Heart left ventricle (tissue), 16 donors: ENCODE measurements at regions of chr6 and their contacts with region 1.

Region 1: DNA sequence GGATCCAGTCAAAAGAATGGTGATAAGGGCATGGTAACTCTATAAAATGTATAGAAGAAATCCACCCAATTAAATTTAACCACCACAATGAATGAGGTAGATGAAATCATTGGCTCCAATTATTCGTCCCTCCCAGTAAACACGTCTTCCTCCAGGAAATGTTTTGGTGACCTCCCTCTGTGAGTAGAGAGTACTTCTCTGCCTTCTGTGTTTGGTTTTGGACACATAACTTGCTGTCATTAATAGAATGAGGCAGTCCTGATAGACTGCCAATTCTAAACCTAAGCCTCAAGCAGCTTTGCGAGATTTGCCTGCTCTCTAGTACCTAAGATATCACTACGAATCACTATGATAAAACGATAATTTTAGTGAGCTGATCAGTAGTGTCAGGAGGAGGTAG is 632.8 kb downstream of the HDGFL1 start:
- DNase-seq: no peak
- ATAC-seq: peak in 3 of 4 donors; percentile 56 to 70 (median 66)
- H3K4me3 ChIP-seq: no peak overlapping the region
- H3K27ac ChIP-seq: no peak overlapping the region
- H3K4me1 ChIP-seq: no peaks in the 10 kb centered on the region
- H3K27me3 ChIP-seq: no peaks in the 10 kb centered on the region
- CTCF ChIP-seq: no peak
- POLR2A ChIP-seq: no peak

Region 2: GRCh38 chr6:23414051-23414446 is 211.8 kb after region 1 on chr6:
- intact Hi-C with region 1: loop called in 1 of 10 experiments (anchors 10 kb)
- DNase-seq: no peak
- ATAC-seq: peak in 2 of 4 donors; percentile 24 to 47
- H3K4me3 ChIP-seq: no peak overlapping the region
- H3K27ac ChIP-seq: no peak overlapping the region
- H3K4me1 ChIP-seq: peaks cover 0 to 20% (median 6%) of the 10 kb centered on the region in 12 donors
- H3K27me3 ChIP-seq: no peaks in the 10 kb centered on the region
- CTCF ChIP-seq: peak in 8 of 12 donors; percentile 10 to 51 (median 36)
- POLR2A ChIP-seq: no peak